ENCODE measurements at regions of chr1 and their contacts with region 1.

Region 1: GRCh38 chr1:205121660-205122488 is at the start of gene RBBP5:
- DNase-seq: peak; percentile 96
- ATAC-seq: peak; percentile 98
- H3K4me3 Mint-ChIP-seq: peak within 1 kb of the TSS; percentile 96
- H3K27ac Mint-ChIP-seq: peak within 1 kb of the TSS; percentile 99
- H3K4me1 Mint-ChIP-seq: peaks cover 39% of the 10 kb centered on the region
- H3K27me3 Mint-ChIP-seq: no peaks in the 10 kb centered on the region
- total RNA-seq, gene RBBP5: 20.3 to 22.0 TPM

Region 2: DNA sequence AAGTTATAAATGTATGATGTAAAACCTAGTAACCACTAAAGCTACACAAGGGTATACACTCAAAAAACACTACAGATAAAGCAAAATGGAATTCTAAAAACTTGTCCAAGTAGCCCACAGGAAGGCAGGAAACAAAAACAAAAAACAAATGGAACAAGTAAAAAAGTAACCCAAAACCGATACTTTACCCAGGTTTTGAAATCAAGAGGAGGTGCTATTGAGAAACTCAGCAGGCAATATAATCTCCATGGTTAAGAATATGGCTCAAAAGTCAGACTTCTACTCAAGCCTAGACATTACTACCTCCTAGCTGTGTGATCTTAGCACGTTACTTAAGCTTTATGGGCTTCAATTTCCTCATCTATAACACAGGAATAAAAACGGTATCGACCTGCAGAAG is 13.4 kb before region 1 on chr1:
- CTCF ChIA-PET with region 1: interaction called, 10 read pairs
- POLR2A ChIA-PET with region 1: interaction called, 6 read pairs
- DNase-seq: no peak
- ATAC-seq: no peak
- H3K4me3 Mint-ChIP-seq: no peak overlapping the region
- H3K27ac Mint-ChIP-seq: no peak overlapping the region
- H3K4me1 Mint-ChIP-seq: no peaks in the 10 kb centered on the region
- H3K27me3 Mint-ChIP-seq: no peaks in the 10 kb centered on the region

Region 3: DNA sequence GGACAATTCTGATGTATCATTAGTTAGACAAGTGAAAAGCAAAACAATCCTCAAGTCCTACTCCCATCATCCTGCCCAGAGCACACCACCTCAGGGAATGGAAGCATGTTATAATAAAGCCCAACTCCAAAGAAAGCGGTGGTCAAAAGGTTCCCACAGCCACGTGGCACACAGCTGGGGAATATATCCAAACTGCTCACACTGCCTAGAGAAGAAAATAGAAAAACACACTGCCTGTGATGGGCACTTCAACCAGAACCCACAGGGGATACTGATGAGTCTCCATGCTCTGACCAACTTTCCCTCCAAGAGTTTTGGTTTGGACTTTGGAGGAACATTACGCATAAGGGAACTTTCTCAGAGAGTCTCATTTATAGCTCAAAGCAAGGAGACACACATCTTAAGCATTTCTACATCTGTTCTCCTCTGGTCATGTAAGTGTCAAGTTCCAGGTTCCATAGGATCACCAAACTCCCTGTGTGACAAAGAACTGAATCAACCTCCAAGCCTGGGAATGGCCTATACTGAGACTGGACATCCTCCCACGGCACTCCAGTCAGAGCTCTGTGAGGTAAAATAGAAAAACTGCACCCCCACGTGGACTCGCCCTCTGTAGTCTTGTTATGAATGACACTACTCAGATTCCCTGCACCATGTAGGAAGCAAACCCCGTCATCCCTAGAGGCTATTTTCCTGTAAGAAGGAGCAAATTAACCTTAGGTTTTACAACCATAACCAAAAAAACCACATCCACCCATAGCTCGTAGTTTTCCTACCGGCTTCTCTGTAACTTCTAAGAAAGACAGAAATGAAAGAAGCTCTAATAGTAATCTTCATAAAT is 77.4 kb after region 1 on chr1:
- CTCF ChIA-PET with region 1: interaction called, 10 read pairs
- POLR2A ChIA-PET with region 1: interaction called, 3 read pairs
- DNase-seq: peak; percentile 43
- ATAC-seq: peak; percentile 83
- H3K4me3 Mint-ChIP-seq: peak overlapping the region; percentile 62
- H3K27ac Mint-ChIP-seq: peak overlapping the region; percentile 71
- H3K4me1 Mint-ChIP-seq: peaks cover 49% of the 10 kb centered on the region
- H3K27me3 Mint-ChIP-seq: no peaks in the 10 kb centered on the region

Measured in activated CD8-positive, alpha-beta T cell treated with anti-CD3 and anti-CD28 coated beads, Interleukin-2, amount 10 ng/mL, durations not matched to agents 7 days and 5 days (primary cell).